ENCODE measurements at regions of chr12 and their contacts with region 1.

Region 1: GRCh38 chr12:122965851-122966722 is at the start of gene ABCB9:
- DNase-seq: peak; percentile 84 to 95 (median 87)
- H3K4me3 ChIP-seq: peak within 1 kb of the TSS in 1 of 2 donors; percentile 70
- H3K4me3 Mint-ChIP-seq: peak within 1 kb of the TSS; percentile 70 to 84 (median 76)
- H3K27ac ChIP-seq: peak within 1 kb of the TSS; percentile 56
- H3K27ac Mint-ChIP-seq: peak within 1 kb of the TSS in 6 of 7 donors; percentile 33 to 86 (median 60)
- H3K4me1 ChIP-seq: peaks cover 11% of the 10 kb centered on the region
- H3K4me1 Mint-ChIP-seq: peaks cover 5 to 11% (median 8%) of the 10 kb centered on the region in 4 donors
- H3K27me3 ChIP-seq: no peaks in the 10 kb centered on the region
- H3K27me3 Mint-ChIP-seq: no peaks in the 10 kb centered on the region
- total RNA-seq, gene ABCB9: 5.9 to 7.1 TPM

Region 2: DNA sequence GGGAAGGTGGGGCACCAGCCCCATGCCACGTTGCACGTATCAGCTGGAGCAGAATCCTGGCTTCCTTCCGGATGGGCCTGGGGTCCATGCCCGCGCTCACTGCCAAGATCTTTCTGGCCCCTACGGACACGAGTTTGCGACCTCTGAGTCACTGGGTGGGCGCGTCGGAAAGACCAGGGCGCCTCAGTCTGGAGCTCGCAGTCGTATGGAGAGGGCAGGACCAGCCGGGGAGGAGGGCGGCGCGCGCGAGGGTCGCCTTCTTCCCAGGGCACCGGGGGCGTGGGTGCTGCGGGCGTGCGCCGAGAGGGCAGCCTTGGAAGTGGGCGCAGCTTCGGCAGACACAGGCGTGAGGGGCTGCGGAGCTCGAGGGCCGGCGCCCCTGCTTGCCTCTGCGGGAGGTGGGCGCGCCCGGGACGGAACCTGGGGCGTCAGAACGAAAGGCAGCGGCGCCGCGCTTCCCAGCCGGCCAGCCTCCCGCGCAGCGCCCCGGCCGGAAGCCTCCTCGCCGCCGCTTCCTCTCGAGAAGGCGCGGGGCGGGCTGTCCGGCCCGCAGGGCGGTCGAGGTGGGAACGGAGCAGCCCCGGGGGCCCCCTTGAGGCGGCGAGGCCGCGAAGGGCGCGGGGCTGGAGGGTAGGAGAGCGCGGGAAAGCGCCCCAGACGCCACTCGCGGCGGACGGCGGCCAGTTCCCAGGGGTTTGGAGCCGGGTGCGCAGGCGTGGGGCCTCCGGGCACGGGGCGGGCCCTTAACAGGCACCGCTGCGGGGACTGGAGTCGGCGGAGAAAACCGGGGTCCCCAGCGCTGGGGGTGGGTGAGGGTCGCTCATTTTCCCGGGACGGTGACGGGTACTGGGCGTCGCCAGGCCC is 14.3 kb after region 1 on chr12 and contains the start of gene ARL6IP4:
- CTCF ChIA-PET with region 1: interaction called, 3 read pairs
- POLR2A ChIA-PET with region 1: interaction called, 24 read pairs
- intact Hi-C with region 1: no loop called
- DNase-seq: peak; percentile 56 to 71 (median 64)
- H3K4me3 ChIP-seq: peak within 1 kb of the TSS; percentile 78 to 83
- H3K4me3 Mint-ChIP-seq: peak within 1 kb of the TSS; percentile 87 to 94 (median 90)
- H3K27ac ChIP-seq: peak within 1 kb of the TSS; percentile 68
- H3K27ac Mint-ChIP-seq: peak within 1 kb of the TSS; percentile 88 to 91 (median 90)
- H3K4me1 ChIP-seq: peaks cover 77% of the 10 kb centered on the region
- H3K4me1 Mint-ChIP-seq: peaks cover 18 to 72% (median 50%) of the 10 kb centered on the region in 4 donors
- H3K27me3 ChIP-seq: no peaks in the 10 kb centered on the region
- H3K27me3 Mint-ChIP-seq: no peaks in the 10 kb centered on the region
- total RNA-seq, gene ARL6IP4: 159 to 180 TPM

Region 3: DNA sequence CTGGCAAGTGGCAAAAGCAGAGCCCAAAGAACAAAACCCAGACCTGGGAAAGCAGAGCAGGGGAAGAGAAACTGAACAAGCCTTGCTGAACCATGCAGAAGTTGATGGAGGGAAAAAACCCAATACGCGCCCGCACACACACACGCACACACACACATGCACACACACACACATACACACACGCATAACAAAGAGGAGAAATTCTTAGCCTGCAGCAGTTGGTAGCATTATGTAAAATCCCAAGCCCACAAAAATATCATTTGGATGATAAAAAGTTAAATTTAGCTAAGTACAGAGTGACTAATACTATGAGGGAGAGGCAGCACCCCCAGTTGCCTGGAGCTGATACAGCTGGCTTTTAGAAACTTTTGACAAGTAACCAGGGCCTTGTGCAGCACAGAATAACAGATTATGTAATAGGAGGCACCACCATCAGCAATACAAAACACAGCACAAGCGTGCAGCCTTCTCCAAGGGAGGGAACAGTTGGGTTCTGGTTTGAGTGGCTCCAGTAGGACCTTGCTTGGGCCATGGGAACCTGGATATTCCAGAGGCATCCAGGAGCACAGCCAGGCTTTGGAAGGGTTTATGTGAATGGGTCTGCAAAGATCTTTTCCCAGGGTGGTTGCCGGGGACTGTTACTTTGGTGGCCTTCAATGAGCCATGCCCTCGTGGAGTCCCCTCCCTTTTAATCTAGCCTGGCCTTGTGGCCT is 149.5 kb after region 1 on chr12:
- CTCF ChIA-PET with region 1: no interaction called
- POLR2A ChIA-PET with region 1: no interaction called
- intact Hi-C with region 1: no loop called
- DNase-seq: peak in 2 of 5 donors; percentile 11 to 19
- H3K4me3 ChIP-seq: no peak overlapping the region
- H3K4me3 Mint-ChIP-seq: peak overlapping the region in 4 of 8 donors; percentile 7 to 47 (median 26)
- H3K27ac ChIP-seq: no peak overlapping the region
- H3K27ac Mint-ChIP-seq: peak overlapping the region in 6 of 7 donors; percentile 31 to 68 (median 62)
- H3K4me1 ChIP-seq: peaks cover 41% of the 10 kb centered on the region
- H3K4me1 Mint-ChIP-seq: peaks cover 15 to 37% (median 24%) of the 10 kb centered on the region in 4 donors
- H3K27me3 ChIP-seq: no peaks in the 10 kb centered on the region
- H3K27me3 Mint-ChIP-seq: no peaks in the 10 kb centered on the region

Measured in CD4-positive, alpha-beta memory T cell (primary cell).